ENCODE measurements at regions of chr17 and their contacts with region 1.

Region 1: GRCh38 chr17:38333635-38334295 is 10.0 kb downstream of the GPR179 start:
- DNase-seq: peak; percentile 81
- ATAC-seq: peak; percentile 91
- H3K4me3 Mint-ChIP-seq: no peak overlapping the region
- H3K27ac Mint-ChIP-seq: no peak overlapping the region
- H3K4me1 Mint-ChIP-seq: no peaks in the 10 kb centered on the region
- H3K27me3 Mint-ChIP-seq: peaks cover 4% of the 10 kb centered on the region

Region 2: DNA sequence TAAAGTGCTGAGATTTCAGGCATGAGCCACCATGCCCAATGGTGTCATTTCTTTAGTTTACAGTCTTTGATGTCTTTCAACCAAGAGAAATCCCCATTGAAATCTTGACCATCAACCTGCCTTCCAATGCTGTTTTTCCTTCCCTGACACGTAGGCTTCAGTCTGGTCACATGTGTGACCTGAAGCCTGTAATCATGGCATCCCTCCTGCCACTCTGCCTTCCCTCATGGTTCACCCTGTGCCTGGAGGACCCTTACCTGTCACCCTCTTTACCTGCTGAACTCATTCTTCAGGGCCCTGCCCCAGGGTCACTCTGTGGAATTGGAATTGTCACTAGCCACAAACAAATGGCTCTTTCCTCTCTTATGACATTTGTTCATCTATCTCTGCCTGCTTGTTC is 76.4 kb after region 1 on chr17:
- CTCF ChIA-PET with region 1: interaction called, 3 read pairs
- POLR2A ChIA-PET with region 1: no interaction called
- intact Hi-C with region 1: loop called (anchors 1 to 5 kb)
- DNase-seq: no peak
- ATAC-seq: no peak
- H3K4me3 Mint-ChIP-seq: no peak overlapping the region
- H3K27ac Mint-ChIP-seq: no peak overlapping the region
- H3K4me1 Mint-ChIP-seq: peaks cover 4% of the 10 kb centered on the region
- H3K27me3 Mint-ChIP-seq: peaks cover 3% of the 10 kb centered on the region

Region 3: DNA sequence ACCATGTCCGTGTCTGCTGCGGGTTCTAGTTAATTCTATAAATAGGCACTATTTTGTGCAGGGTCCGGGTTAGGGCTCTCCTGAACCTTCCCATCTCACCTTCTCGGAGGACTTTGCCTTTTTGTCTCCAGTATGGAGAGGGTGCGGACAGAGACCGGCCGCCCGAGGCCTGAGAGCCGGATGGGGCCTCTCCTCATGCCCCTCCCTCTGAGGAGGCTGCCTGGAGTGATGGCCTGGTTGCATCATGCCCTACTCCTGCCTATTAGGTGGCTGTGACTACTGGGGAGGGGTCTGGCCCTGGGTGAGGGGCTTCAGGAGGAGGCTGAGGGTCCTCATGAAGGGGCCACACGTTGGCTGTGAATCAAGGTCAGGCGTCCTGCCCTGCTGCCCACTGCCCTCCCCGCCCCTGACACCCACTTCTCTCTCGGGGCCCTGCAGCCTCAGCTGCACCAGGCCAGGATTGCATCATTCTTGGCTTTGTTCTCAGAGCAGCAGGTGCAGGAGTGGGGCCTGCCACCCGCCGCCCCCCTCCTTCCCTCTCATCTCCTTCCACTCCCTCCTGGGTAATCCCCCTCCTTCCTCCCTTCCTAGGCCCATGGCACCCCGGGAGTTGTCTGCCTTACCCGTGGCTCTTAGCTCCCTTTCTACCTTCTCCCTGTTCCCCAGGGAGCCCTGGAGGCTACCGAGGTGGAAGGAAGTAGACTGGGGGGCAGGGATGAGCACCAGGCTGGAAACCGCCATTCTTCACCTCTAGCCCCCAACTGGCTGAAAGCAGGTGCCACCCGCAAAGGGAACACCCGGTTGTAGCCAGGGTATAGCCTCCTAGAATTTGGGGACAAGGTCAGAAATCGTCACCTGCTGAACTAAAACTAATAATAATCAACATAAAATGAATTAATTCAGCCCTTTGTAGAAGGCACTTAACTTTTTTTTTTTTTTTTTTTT is 81.8 kb after region 1 on chr17:
- CTCF ChIA-PET with region 1: interaction called, 3 read pairs
- POLR2A ChIA-PET with region 1: no interaction called
- intact Hi-C with region 1: loop called (anchors 1 to 5 kb)
- DNase-seq: peak; percentile 64
- ATAC-seq: peak; percentile 69
- H3K4me3 Mint-ChIP-seq: peak overlapping the region; percentile 62
- H3K27ac Mint-ChIP-seq: peak overlapping the region; percentile 92
- H3K4me1 Mint-ChIP-seq: peaks cover 13% of the 10 kb centered on the region
- H3K27me3 Mint-ChIP-seq: peaks cover 32% of the 10 kb centered on the region

Region 4: DNA sequence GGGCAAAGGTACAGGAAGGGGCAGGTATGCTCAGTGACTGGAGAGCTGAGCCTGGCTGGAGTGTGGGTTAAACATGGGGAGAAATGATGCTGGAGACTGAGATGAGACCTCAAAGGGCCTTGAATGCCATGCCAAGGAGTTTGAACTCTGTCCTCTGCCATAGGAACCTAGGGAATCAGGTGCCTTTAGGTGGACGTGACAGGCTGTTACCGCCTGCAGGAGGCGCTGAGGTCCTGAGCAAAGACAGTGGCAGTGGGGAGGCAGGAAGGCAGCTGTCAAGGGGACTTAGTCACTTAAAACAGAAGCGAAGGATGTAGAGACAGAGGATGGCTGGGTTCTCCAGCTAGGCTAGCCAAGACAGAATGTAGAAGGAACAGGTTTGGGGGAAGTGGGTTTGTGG is 427.8 kb after region 1 on chr17:
- CTCF ChIA-PET with region 1: no interaction called
- POLR2A ChIA-PET with region 1: no interaction called
- intact Hi-C with region 1: no loop called
- DNase-seq: peak; percentile 71
- ATAC-seq: peak; percentile 91
- H3K4me3 Mint-ChIP-seq: no peak overlapping the region
- H3K27ac Mint-ChIP-seq: peak overlapping the region; percentile 34
- H3K4me1 Mint-ChIP-seq: peaks cover 4% of the 10 kb centered on the region
- H3K27me3 Mint-ChIP-seq: no peaks in the 10 kb centered on the region